Calu3 (cell line): ENCODE measurements at regions of chr11 and their contacts with region 1.

Region 1: DNA sequence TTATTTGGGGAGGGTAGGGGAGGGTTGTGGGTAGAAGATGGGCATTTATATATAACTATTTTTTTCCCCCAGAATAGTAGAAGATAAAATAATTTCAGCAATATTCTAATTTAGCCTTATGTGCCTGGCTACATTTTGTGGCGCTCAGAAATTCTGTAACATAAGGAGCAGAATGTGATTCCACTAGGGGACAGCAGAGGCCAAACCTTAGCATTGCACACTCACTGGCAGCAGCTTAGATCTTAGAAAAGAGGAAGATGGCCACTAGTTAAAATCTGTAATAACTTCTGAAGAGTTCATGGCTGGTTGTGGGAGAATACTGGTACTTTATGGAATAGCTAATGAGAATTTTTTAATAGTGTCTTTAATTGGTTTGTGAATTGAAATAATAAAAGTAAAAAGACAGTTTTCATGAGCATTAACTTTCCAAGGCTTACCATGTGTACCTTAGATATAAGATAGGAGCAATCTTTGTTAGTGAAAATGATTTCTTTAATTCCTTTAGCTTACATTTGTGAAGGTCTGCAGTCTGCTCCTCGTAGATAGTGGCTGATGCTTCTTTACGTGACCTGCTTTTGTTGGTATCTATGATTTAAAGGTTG is 33.1 kb downstream of the DDX10 start:
- DNase-seq: peak; percentile 34
- H3K4me3 Mint-ChIP-seq: no peak overlapping the region
- H3K27ac Mint-ChIP-seq: no peak overlapping the region
- H3K4me1 Mint-ChIP-seq: no peaks in the 10 kb centered on the region
- H3K27me3 Mint-ChIP-seq: no peaks in the 10 kb centered on the region
- CTCF ChIP-seq: peak; percentile 38

Region 2: GRCh38 chr11:108635071-108635470 is 62.9 kb before region 1 on chr11:
- CTCF ChIA-PET with region 1: no interaction called
- intact Hi-C with region 1: no loop called
- DNase-seq: no peak
- H3K4me3 Mint-ChIP-seq: no peak overlapping the region
- H3K27ac Mint-ChIP-seq: no peak overlapping the region
- H3K4me1 Mint-ChIP-seq: peaks cover 11% of the 10 kb centered on the region
- H3K27me3 Mint-ChIP-seq: no peaks in the 10 kb centered on the region
- CTCF ChIP-seq: no peak

Region 3: GRCh38 chr11:108664730-108665525 is 33.0 kb before region 1 on chr11 and contains the start of gene DDX10:
- CTCF ChIA-PET with region 1: no interaction called
- intact Hi-C with region 1: no loop called
- DNase-seq: peak; percentile 93
- H3K4me3 Mint-ChIP-seq: peak within 1 kb of the TSS; percentile 98
- H3K27ac Mint-ChIP-seq: peak within 1 kb of the TSS; percentile 98
- H3K4me1 Mint-ChIP-seq: peaks cover 36% of the 10 kb centered on the region
- H3K27me3 Mint-ChIP-seq: no peaks in the 10 kb centered on the region
- CTCF ChIP-seq: no peak
- total RNA-seq, gene DDX10: 31.2 and 31.7 TPM in 2 replicates

Region 4: DNA sequence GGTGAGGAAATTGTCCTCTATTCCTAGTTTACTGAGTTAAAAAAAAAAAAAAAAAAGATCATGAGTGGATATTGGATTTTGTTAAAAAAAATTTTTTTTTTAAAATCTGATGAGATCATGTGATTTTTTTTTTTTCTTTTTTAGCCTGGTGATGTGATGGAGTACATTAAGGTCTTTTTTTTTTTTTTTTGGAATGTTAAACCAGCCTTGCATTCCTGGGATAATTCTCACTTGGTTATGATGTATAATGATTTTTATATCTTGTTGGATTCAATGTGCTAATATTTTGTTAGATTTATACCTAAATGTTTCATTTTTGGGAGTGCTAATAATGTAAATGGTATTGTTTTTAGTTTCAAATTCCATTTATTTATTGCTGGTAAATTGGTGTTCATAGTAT is 10.2 kb after region 1 on chr11:
- CTCF ChIA-PET with region 1: no interaction called
- intact Hi-C with region 1: no loop called
- DNase-seq: no peak
- H3K4me3 Mint-ChIP-seq: no peak overlapping the region
- H3K27ac Mint-ChIP-seq: no peak overlapping the region
- H3K4me1 Mint-ChIP-seq: peaks cover 3% of the 10 kb centered on the region
- H3K27me3 Mint-ChIP-seq: no peaks in the 10 kb centered on the region
- CTCF ChIP-seq: no peak

Region 5: DNA sequence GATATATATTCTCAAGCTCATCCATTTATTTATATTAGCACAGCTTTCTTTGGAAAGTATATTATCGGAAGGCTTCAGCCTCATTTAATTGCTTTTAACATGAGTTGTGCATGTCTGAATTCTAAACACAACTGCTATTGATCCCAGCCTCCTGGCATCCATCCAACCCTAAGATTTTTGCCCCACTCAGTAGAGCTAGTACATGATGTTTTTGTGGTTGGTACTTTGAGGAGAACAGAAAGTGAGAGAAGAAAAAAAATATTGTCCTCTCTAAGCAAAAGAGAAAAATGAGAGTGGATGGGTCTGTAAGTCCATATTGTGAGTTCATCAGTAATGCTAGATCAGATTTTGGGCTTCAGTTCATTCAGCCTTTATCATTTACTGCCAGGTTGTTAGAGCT is 165.6 kb after region 1 on chr11:
- CTCF ChIA-PET with region 1: no interaction called
- intact Hi-C with region 1: no loop called
- DNase-seq: no peak
- H3K4me3 Mint-ChIP-seq: no peak overlapping the region
- H3K27ac Mint-ChIP-seq: no peak overlapping the region
- H3K4me1 Mint-ChIP-seq: no peaks in the 10 kb centered on the region
- H3K27me3 Mint-ChIP-seq: no peaks in the 10 kb centered on the region
- CTCF ChIP-seq: no peak

Region 6: DNA sequence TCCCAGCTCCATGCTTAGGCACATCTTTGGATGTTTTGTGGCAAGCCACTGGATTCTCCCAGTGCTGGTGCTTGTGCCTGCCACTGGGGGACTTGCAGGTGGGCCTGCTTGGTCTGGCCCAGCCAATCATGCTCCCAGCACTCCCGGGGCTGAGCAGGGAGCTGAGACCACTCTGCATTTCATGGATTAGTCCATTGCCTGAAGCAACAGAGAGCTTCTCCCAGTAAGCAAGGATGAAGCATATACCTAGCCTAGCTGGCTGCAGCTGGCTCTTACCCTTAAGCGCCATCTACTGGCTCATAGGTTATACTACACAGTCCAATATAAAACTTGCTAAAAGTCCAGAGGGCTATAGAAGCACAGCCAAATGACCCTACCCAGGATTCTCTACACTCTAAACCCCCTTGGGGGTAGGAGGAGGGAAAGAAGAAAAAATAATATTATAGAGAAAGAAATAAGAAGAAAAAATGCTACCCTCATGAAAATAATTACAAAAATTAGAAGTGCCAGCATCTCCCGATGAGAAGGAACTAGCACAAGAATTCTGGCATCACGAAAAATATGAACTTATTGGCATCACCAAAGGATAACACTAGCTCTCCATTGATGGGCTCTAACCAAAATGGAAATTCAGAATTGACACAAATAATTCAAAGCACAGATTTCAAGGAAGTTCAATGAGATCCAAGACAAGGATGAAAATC is 999.3 kb after region 1 on chr11:
- CTCF ChIA-PET with region 1: interaction called, 3 read pairs
- intact Hi-C with region 1: loop called (anchors 5 kb)
- DNase-seq: no peak
- H3K4me3 Mint-ChIP-seq: no peak overlapping the region
- H3K27ac Mint-ChIP-seq: no peak overlapping the region
- H3K4me1 Mint-ChIP-seq: no peaks in the 10 kb centered on the region
- H3K27me3 Mint-ChIP-seq: no peaks in the 10 kb centered on the region
- CTCF ChIP-seq: peak; percentile 46